AG04449 (cell line): ENCODE measurements at regions of chr12 and their contacts with region 1.

Region 1: GRCh38 chr12:20390846-20391245 is 22.5 kb downstream of the PDE3A start:
- DNase-seq: no peak
- H3K4me3 ChIP-seq: no peak overlapping the region
- CTCF ChIP-seq: no peak

Region 2: DNA sequence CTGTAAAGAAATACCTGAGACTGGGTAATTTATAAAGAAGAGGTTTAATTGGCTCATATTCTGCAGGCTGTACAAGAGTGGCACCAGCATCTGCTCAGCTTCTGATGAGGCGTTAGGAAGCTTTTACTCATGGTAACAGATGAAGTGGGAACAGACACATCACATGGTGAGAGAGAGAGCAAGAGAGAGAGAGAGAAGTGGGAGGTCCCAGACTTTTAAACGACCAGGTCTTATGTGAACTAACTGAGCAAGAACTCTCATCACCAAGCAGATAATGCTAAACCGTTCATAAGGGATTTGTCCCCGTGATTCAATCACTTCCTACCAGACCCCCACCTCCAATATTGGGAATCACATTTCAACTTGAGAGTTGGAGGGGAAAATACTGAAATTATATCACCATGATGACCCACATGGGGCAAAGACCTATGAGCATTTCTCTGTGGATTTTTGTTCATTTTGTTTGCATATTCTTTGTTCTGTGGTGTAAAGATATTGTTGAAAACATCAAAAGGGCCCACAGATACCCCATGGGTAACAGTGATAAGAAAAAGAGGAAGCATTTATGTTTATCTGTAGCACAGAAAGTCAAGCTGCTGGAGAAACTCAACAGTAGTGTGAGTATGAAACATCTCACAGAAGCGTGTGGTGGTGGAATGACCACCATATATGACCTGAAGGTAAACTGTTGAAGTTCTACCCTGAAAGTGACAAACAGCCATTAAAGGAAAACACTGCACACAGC is 157.7 kb before region 1 on chr12:
- CTCF ChIA-PET with region 1: no interaction called
- POLR2A ChIA-PET with region 1: no interaction called
- DNase-seq: no peak
- H3K4me3 ChIP-seq: no peak overlapping the region
- CTCF ChIP-seq: no peak

Region 3: DNA sequence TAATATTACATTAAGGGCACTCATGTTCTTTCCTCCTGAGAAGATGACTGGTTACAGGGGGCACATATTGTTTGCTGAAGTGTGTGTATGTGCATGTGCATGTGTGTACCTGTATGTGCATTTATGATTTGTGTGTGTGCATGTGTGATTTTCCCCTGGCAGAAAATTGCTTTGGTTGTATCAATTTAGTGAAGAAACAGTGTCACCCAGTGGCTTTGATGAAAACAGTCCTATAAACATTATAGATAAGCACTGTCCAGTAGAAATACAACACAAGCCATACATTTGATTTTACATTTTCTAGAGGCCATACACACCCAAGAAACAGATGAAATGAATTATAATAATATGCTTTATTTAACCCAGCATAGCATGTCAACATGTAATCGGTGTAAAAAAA is 13.9 kb before region 1 on chr12:
- CTCF ChIA-PET with region 1: interaction called, 12 read pairs
- POLR2A ChIA-PET with region 1: no interaction called
- DNase-seq: no peak
- H3K4me3 ChIP-seq: no peak overlapping the region
- CTCF ChIP-seq: peak; percentile 15